ENCODE measurements at regions of chr19 and their contacts with region 1.

Region 1: DNA sequence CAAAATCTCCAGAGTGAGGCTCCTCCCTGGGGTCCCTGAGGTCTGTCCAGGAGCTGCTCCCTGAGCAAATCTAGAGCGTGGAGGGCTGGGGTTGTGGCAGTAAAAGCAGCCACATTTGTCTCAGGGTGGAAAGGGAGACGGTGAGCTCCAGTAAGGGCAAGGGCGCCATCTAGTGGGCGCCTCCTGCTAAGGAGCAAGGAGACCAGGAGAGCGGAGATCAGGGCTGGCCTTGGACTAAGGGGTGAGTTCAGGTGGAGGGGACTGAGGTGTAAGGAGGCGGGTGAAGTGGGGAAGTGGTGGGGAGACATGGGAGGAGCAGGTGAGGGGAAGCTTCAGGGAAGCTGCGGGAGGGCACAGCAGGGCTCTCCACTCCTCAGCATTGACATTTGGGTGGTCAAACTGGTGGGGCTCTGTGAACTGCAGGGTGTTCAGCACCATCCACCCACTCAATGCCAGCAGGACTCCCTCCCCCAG is 5.3 kb upstream of the CEACAM21 start:
- DNase-seq: peak; percentile 73 to 85 (median 82)
- ATAC-seq: peak; percentile 99
- H3K4me3 ChIP-seq: no peak overlapping the region
- H3K4me3 Mint-ChIP-seq: peak overlapping the region in 4 of 10 donors; percentile 2 to 51 (median 26)
- H3K27ac ChIP-seq: no peak overlapping the region
- H3K27ac Mint-ChIP-seq: peak overlapping the region in 8 of 9 donors; percentile 8 to 89 (median 69)
- H3K4me1 ChIP-seq: peaks cover 13 to 35% of the 10 kb centered on the region in 2 donors
- H3K4me1 Mint-ChIP-seq: peaks cover 34 to 68% (median 47%) of the 10 kb centered on the region in 7 donors
- H3K27me3 ChIP-seq: no peaks in the 10 kb centered on the region
- H3K27me3 Mint-ChIP-seq: no peaks in the 10 kb centered on the region

Region 2: DNA sequence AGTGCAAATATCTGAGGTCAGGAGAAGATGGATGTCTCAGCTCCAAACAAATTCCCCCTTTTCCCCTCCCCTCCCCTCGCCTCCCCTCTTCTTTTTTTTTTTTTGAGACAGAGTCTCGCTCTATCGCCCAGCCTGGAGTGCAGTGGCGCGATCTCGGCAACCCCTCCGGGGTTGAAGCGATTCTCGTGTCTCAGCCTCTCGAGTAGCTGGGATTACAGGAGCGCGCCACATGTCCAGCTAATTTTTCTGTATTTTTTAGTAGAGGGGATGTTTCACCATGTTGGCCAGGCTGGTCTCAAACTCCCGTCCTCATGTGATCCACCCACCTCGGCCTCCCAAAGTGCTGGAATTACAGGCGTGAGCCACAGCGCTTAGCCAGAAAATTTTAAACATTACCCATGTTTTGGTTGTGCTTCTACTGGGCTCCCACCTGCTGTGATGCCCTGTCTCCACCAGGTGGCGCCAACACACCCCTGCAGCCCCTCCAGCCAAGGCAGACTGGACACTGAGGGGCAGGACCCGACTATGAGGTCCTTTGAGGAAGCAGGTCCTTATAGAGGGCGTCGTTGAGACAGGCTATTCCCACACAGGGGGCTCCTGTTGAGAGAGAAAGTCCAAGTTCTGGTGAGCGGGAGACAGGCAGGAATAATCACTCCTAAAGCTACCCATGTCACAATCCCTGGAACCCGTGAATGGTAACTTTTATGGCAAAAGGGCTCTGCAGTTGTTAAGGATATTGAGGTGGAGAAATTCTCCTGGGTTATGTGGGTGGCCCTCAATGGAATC is 121.4 kb before region 1 on chr19:
- CTCF ChIA-PET with region 1: interaction called, 88 read pairs
- POLR2A ChIA-PET with region 1: interaction called, 8 read pairs
- intact Hi-C with region 1: loop called (anchors 1 kb)
- DNase-seq: peak; percentile 48 to 78 (median 67)
- ATAC-seq: peak; percentile 97
- H3K4me3 ChIP-seq: peak overlapping the region; percentile 41
- H3K4me3 Mint-ChIP-seq: peak overlapping the region; percentile 69 to 86 (median 80)
- H3K27ac ChIP-seq: no peak overlapping the region
- H3K27ac Mint-ChIP-seq: peak overlapping the region in 5 of 9 donors; percentile 59 to 80 (median 67)
- H3K4me1 ChIP-seq: peaks cover 0 to 10% of the 10 kb centered on the region in 2 donors
- H3K4me1 Mint-ChIP-seq: peaks cover 7 to 32% (median 13%) of the 10 kb centered on the region in 7 donors
- H3K27me3 ChIP-seq: no peaks in the 10 kb centered on the region
- H3K27me3 Mint-ChIP-seq: peaks cover 0 to 3% (median 0%) of the 10 kb centered on the region in 5 donors

Region 3: GRCh38 chr19:41531438-41532311 is 39.0 kb before region 1 on chr19:
- CTCF ChIA-PET with region 1: interaction called, 384 read pairs
- POLR2A ChIA-PET with region 1: interaction called, 518 read pairs
- intact Hi-C with region 1: loop called (anchors 5 kb)
- DNase-seq: peak; percentile 59 to 95 (median 93)
- ATAC-seq: peak; percentile 95
- H3K4me3 ChIP-seq: peak overlapping the region; percentile 46
- H3K4me3 Mint-ChIP-seq: peak overlapping the region; percentile 77 to 98 (median 84)
- H3K27ac ChIP-seq: peak overlapping the region; percentile 75
- H3K27ac Mint-ChIP-seq: peak overlapping the region; percentile 83 to 98 (median 92)
- H3K4me1 ChIP-seq: peaks cover 32 to 46% of the 10 kb centered on the region in 2 donors
- H3K4me1 Mint-ChIP-seq: peaks cover 50 to 70% (median 64%) of the 10 kb centered on the region in 7 donors
- H3K27me3 ChIP-seq: no peaks in the 10 kb centered on the region
- H3K27me3 Mint-ChIP-seq: peaks cover 0 to 7% (median 0%) of the 10 kb centered on the region in 5 donors

Region 4: DNA sequence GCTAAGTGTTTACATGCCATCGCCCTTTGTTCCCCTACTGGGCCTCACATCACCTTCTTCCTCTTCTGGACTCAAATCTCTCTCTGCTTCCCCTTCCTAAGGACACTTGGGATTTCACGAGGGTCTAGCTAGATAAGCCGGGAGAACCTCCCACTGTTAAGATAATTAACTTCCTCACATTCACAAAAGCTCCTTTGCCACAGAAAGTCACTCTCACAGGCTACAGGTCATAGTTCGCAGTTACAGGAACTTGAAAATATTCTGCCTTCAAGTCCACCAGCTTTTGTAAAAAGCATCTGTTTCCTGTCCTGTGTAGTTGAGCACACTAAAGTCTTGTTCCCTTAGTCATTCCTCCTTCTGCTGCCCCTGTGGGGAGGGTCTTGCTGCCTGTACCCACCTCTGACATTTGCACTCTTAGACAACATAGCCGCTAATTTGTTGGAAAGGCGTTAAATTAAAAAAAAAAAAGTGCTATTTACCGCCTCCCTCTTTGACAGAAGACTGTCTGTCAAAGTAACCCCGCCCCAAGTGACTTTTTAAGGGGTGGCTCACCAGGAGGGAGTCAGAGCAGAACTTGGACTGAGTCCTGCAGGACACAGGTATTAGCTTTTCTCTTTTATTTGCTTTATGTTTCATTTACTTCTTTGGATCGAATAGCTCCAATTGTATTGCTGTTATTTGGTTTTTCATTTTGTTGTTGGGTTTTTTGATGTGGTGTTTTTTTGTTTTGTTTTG is 21.6 kb before region 1 on chr19:
- CTCF ChIA-PET with region 1: interaction called, 384 read pairs
- POLR2A ChIA-PET with region 1: interaction called, 518 read pairs
- intact Hi-C with region 1: no loop called
- DNase-seq: peak in 8 of 9 donors; percentile 68 to 82 (median 78)
- ATAC-seq: peak; percentile 82
- H3K4me3 ChIP-seq: peak overlapping the region; percentile 77
- H3K4me3 Mint-ChIP-seq: peak overlapping the region; percentile 91 to 100 (median 98)
- H3K27ac ChIP-seq: peak overlapping the region; percentile 88
- H3K27ac Mint-ChIP-seq: peak overlapping the region; percentile 92 to 97 (median 96)
- H3K4me1 ChIP-seq: peaks cover 43 to 53% of the 10 kb centered on the region in 2 donors
- H3K4me1 Mint-ChIP-seq: peaks cover 58 to 72% (median 61%) of the 10 kb centered on the region in 7 donors
- H3K27me3 ChIP-seq: no peaks in the 10 kb centered on the region
- H3K27me3 Mint-ChIP-seq: no peaks in the 10 kb centered on the region

Region 5: GRCh38 chr19:41597600-41598041 is 26.9 kb after region 1 on chr19:
- CTCF ChIA-PET with region 1: interaction called, 25 read pairs
- POLR2A ChIA-PET with region 1: no interaction called
- intact Hi-C with region 1: loop called in 1 of 2 experiments (anchors 1 kb)
- DNase-seq: peak; percentile 35 to 77 (median 69)
- ATAC-seq: peak; percentile 93
- H3K4me3 ChIP-seq: no peak overlapping the region
- H3K4me3 Mint-ChIP-seq: peak overlapping the region in 3 of 10 donors; percentile 10 to 78 (median 19)
- H3K27ac ChIP-seq: no peak overlapping the region
- H3K27ac Mint-ChIP-seq: peak overlapping the region in 1 of 9 donors; percentile 17
- H3K4me1 ChIP-seq: no peaks in the 10 kb centered on the region
- H3K4me1 Mint-ChIP-seq: peaks cover 9 to 17% (median 12%) of the 10 kb centered on the region in 7 donors
- H3K27me3 ChIP-seq: no peaks in the 10 kb centered on the region
- H3K27me3 Mint-ChIP-seq: peaks cover 0 to 38% (median 9%) of the 10 kb centered on the region in 5 donors

Region 6: GRCh38 chr19:41616792-41617621 is 46.3 kb after region 1 on chr19:
- CTCF ChIA-PET with region 1: no interaction called
- POLR2A ChIA-PET with region 1: no interaction called
- intact Hi-C with region 1: no loop called
- DNase-seq: no peak
- ATAC-seq: no peak
- H3K4me3 ChIP-seq: no peak overlapping the region
- H3K4me3 Mint-ChIP-seq: no peak overlapping the region
- H3K27ac ChIP-seq: no peak overlapping the region
- H3K27ac Mint-ChIP-seq: peak overlapping the region in 1 of 9 donors; percentile 59
- H3K4me1 ChIP-seq: no peaks in the 10 kb centered on the region
- H3K4me1 Mint-ChIP-seq: peaks cover 0 to 7% (median 0%) of the 10 kb centered on the region in 7 donors
- H3K27me3 ChIP-seq: no peaks in the 10 kb centered on the region
- H3K27me3 Mint-ChIP-seq: peaks cover 0 to 24% (median 14%) of the 10 kb centered on the region in 5 donors

Measured in naive thymus-derived CD4-positive, alpha-beta T cell (primary cell).